ENCODE measurements at regions of chr16 and their contacts with region 1.

Region 1: GRCh38 chr16:22174642-22175041 is 12.3 kb downstream of the SDR42E2 start:
- DNase-seq: peak in 1 of 5 donors; percentile 23
- ATAC-seq: no peak
- H3K4me3 ChIP-seq: no peak overlapping the region
- H3K27ac ChIP-seq: no peak overlapping the region
- H3K4me1 ChIP-seq: no peaks in the 10 kb centered on the region
- H3K27me3 ChIP-seq: no peaks in the 10 kb centered on the region
- CTCF ChIP-seq: no peak
- POLR2A ChIP-seq: no peak

Region 2: GRCh38 chr16:22109258-22109898 is 65.3 kb before region 1 on chr16:
- intact Hi-C with region 1: loop called in 1 of 10 experiments (anchors 5 kb)
- DNase-seq: no peak
- ATAC-seq: no peak
- H3K4me3 ChIP-seq: no peak overlapping the region
- H3K27ac ChIP-seq: no peak overlapping the region
- H3K4me1 ChIP-seq: no peaks in the 10 kb centered on the region
- H3K27me3 ChIP-seq: peaks cover 0 to 2% (median 0%) of the 10 kb centered on the region in 9 donors
- CTCF ChIP-seq: no peak
- POLR2A ChIP-seq: no peak

Region 3: DNA sequence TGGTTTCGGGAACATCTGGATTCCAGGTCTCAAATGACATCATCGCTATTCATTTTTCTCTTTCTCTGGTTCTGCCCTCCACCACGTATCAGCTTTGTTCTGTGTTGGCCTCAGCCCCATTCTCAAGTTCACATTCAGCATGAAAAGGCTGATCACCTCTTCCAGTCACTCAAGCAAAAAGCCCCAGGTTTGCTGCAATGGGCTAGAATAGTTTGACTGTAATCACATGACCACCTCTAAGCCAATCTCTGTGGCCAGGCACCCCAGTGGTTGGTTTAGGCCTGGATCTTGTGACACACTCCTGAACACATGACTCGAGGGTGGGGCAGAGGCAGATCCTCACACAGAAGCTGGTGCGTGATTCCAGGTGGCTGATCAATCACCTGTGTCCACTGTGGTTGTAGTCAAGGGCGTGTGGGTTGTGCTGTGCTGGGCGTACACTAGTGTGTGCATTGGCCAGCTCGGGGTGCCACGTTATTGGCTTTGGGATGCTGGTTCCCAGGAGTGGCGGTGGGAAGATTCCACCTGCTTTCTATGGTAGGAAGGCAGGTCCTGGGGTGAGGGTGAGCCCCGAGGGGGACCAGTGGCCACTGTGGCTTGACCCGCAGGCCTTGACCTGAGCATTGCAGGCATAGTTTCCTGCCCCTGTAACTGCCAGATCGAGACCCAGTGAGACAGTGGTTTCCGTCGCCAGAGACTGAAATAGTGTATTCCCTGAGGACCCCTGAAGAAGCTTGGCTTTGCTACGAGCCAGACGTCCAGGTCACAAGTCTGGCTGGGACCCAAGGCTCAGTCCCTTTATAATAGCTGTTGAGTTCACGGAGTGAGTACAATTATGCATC is 43.5 kb after region 1 on chr16:
- intact Hi-C with region 1: no loop called
- DNase-seq: peak; percentile 46 to 63 (median 57)
- ATAC-seq: peak in 2 of 4 donors; percentile 15 to 43
- H3K4me3 ChIP-seq: no peak overlapping the region
- H3K27ac ChIP-seq: peak overlapping the region in 5 of 12 donors; percentile 14 to 73 (median 34)
- H3K4me1 ChIP-seq: peaks cover 0 to 43% (median 27%) of the 10 kb centered on the region in 12 donors
- H3K27me3 ChIP-seq: no peaks in the 10 kb centered on the region
- CTCF ChIP-seq: no peak
- POLR2A ChIP-seq: no peak

Measured in heart left ventricle (tissue), 16 donors.